K562 (cell line): ENCODE measurements at regions of chr4 and their contacts with region 1.

Region 1: DNA sequence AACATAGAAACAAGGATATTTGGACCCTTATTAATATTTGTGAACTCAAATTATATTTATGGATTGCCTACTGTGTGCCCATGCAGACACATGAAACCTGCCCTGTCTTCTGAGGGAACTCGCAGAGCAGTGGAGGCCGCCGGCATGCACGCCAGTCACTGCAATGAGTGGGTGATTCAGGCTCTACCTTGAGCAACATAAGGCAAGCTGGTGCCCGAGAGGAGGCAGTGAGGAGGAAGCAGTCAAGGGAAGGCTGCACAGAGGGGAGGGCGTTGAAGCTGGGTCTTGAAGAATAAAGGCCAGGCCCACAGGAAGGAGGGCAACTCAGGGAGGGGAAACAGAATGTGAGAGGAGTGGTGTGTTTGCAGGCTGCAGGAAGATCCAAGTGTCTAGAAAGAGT is 52.8 kb downstream of the PPEF2 start:
- DNase-seq: peak in 1 of 4 experiments; percentile 7
- ATAC-seq: 0 out of 3 replicates have a peak, but pooled peaks have one; percentile 15
- H3K4me3 ChIP-seq: no peak overlapping the region
- H3K27ac ChIP-seq: no peak overlapping the region
- H3K4me1 ChIP-seq: peaks cover 0 to 5% of the 10 kb centered on the region in 2 experiments; a peak in 3 of 5 replicates
- H3K27me3 ChIP-seq: peaks cover 0 to 21% of the 10 kb centered on the region in 2 experiments; a peak in 4 of 5 replicates
- CTCF ChIP-seq: no peak
- EP300 ChIP-seq: no peak
- POLR2A ChIP-seq: no peak
- RAD21 ChIP-seq: no peak

Region 2: GRCh38 chr4:75584067-75584466 is 265.4 kb before region 1 on chr4:
- CTCF ChIA-PET with region 1: no interaction called
- POLR2A ChIA-PET with region 1: no interaction called
- in situ Hi-C with region 1: loop called (anchors 5 kb)
- intact Hi-C with region 1: no loop called
- DNase-seq: no peak
- ATAC-seq: no peak
- H3K4me3 ChIP-seq: no peak overlapping the region
- H3K27ac ChIP-seq: no peak overlapping the region
- H3K4me1 ChIP-seq: no peaks in the 10 kb centered on the region
- H3K27me3 ChIP-seq: no peaks in the 10 kb centered on the region; a peak in 1 of 5 replicates
- CTCF ChIP-seq: no peak
- EP300 ChIP-seq: no peak
- POLR2A ChIP-seq: no peak
- RAD21 ChIP-seq: no peak

Region 3: DNA sequence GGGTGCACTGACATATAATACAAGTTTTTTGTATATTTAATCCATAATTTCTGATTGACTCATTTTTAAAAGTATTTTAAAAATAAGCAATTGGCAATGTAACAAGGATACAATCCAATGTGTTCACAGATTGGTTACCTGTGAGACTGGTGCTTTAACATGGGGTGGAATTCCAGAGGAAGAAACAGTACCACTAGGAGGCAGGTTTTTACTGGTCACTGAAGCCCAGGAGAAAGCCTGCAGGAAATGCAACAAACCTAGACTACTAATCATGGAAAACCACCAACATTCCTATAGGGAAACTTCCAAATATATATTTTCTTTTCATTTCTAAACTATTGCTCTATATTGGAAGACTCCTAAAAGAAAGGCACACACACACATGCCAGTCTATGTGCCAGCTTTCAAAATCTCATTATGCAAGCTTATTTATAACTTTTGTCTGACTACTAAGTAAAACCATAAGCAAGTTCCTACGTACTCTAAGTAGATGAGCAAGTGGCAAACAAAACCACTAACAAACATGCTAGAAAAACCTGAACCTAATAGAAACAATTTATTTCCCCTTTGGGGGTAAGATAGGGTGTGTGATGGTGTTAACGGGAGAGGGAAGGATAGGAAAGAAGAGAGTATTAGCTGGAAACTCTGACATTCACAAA is 195.5 kb before region 1 on chr4:
- CTCF ChIA-PET with region 1: no interaction called
- POLR2A ChIA-PET with region 1: no interaction called
- in situ Hi-C with region 1: no loop called
- intact Hi-C with region 1: loop called (anchors 1 kb)
- DNase-seq: peak in 1 of 4 experiments; percentile 21
- ATAC-seq: peak; percentile 71
- H3K4me3 ChIP-seq: no peak overlapping the region
- H3K27ac ChIP-seq: no peak overlapping the region
- H3K4me1 ChIP-seq: no peaks in the 10 kb centered on the region
- H3K27me3 ChIP-seq: no peaks in the 10 kb centered on the region
- CTCF ChIP-seq: peak; percentile 34 to 61 (median 38); a peak in 4 of 6 replicates
- EP300 ChIP-seq: no peak
- POLR2A ChIP-seq: no peak
- RAD21 ChIP-seq: peak in 1 of 2 experiments; percentile 58; a peak in 2 of 4 replicates

Region 4: DNA sequence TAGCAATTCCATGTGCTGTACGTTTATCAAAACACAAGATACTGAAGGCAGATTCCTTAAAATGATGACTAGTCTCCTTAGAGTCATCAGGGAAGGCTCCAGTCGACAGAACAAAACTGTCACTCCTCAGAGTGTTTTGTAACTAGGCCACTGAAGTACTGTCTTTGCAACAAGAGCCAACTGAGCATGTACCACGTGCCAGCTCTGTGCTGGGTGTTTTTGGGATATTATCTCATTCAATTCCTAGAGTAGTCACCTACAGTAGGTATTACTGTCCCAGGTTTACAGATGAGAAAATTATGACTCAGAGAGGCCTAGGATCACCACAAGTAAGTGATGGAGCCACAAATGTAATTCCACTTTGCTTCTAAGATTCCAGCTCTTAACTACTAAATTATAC is 317.0 kb after region 1 on chr4:
- CTCF ChIA-PET with region 1: no interaction called
- POLR2A ChIA-PET with region 1: no interaction called
- in situ Hi-C with region 1: no loop called
- intact Hi-C with region 1: no loop called
- DNase-seq: no peak
- ATAC-seq: no peak
- H3K4me3 ChIP-seq: no peak overlapping the region
- H3K27ac ChIP-seq: no peak overlapping the region
- H3K4me1 ChIP-seq: no peaks in the 10 kb centered on the region
- H3K27me3 ChIP-seq: no peaks in the 10 kb centered on the region
- CTCF ChIP-seq: no peak
- EP300 ChIP-seq: no peak
- POLR2A ChIP-seq: no peak
- RAD21 ChIP-seq: no peak